Activated CD4-positive, alpha-beta memory T cell treated with anti-CD3 and anti-CD28 coated beads for 36 hours (primary cell): ENCODE measurements at regions of chr2 and their contacts with region 1.

Region 1: DNA sequence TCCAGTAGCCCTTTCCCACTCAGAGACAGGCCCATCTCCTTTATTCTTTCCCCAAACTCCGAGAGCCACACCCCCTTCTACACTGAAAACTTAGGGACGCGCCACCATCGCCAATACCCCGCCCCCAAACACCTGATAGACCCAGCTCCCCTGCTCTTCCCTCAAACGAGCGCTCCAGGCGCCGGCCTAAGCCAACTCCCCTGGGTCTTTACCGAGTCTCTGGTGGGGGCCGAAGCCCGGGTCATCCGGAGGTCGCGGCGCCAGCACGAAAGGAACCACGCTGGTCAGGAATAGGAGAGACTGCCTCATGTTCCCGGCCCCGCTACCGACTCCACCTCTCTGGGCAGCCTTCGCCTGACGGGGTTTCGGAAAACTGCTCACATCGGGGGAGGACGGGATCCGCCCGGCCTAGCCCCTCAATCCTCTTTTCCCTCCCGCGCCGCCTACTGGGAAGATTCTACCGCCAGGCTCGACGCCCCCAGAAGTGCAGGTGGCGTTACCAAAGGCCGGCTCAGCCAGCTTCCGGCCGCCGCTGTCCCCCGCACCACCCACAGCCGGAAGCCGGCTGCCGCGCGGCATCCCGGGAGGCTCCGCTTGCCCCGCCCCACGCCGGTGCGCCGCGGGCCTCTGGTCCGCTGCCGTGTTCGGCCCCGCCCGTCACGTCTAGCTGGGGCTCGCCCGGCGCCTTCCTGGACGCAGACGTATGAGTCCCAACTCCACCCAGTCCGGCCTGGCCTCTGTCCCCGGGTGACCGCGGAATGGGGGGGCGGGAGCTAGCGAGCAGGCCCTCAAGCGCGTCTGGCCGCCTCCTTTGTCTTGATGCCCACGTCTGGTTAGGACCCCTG is at the start of gene ADAM17:
- DNase-seq: peak; percentile 93
- H3K4me3 Mint-ChIP-seq: peak within 1 kb of the TSS; percentile 100
- H3K27ac Mint-ChIP-seq: peak within 1 kb of the TSS; percentile 98
- H3K4me1 Mint-ChIP-seq: peaks cover 50% of the 10 kb centered on the region
- H3K27me3 Mint-ChIP-seq: no peaks in the 10 kb centered on the region
- total RNA-seq, gene ADAM17: 24.0 to 24.7 TPM

Region 2: GRCh38 chr2:9423100-9423921 is 132.2 kb before region 1 on chr2 and contains the starts of genes CPSF3 and ITGB1BP1:
- CTCF ChIA-PET with region 1: interaction called, 6 read pairs
- POLR2A ChIA-PET with region 1: interaction called, 7 read pairs
- intact Hi-C with region 1: loop called (anchors 1 kb)
- DNase-seq: peak; percentile 98
- H3K4me3 Mint-ChIP-seq: peak within 1 kb of the TSS; percentile 87
- H3K27ac Mint-ChIP-seq: peak within 1 kb of the TSS; percentile 88
- H3K4me1 Mint-ChIP-seq: peaks cover 35% of the 10 kb centered on the region
- H3K27me3 Mint-ChIP-seq: no peaks in the 10 kb centered on the region
- total RNA-seq, gene CPSF3: 77.5 to 78.1 TPM
- total RNA-seq, gene ITGB1BP1: 136 to 142 TPM

Region 3: DNA sequence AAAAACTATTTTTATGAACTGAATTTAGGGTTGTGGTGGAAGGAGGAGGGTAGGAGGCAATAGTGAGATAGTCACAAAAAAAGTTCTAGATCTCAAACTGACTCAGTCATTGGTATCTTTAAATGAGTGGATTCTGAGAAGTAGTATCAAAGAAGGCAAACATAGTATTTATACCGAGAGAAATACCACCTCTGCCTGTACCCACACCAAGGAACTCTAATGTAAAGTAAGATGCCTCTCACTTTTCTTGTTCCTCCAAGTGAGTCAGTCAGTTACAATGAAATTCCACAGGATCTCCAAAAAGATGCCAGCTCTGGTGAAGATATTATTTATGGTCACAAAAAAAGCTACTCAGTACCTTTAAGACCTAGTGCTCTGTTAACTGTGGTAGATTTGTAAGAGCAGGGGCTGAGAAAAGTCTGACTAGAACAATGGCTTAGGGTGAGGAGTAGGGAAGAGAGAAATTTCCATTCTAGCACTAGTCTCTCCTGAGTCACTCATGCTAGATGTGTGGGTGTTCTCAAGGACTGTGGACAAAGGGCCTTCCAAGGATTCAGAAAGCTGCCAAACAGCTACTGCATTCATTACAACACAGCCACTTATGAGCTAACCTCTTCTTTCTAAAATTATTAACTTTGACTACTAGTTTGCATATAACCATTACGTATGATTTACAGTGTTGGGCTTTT is 39.0 kb after region 1 on chr2:
- CTCF ChIA-PET with region 1: interaction called, 17 read pairs
- POLR2A ChIA-PET with region 1: interaction called, 11 read pairs
- intact Hi-C with region 1: loop called (anchors 1 kb)
- DNase-seq: no peak
- H3K4me3 Mint-ChIP-seq: no peak overlapping the region
- H3K27ac Mint-ChIP-seq: peak overlapping the region; percentile 83
- H3K4me1 Mint-ChIP-seq: peaks cover 81% of the 10 kb centered on the region
- H3K27me3 Mint-ChIP-seq: no peaks in the 10 kb centered on the region

Region 4: GRCh38 chr2:9656270-9656766 is 100.8 kb after region 1 on chr2:
- CTCF ChIA-PET with region 1: no interaction called
- POLR2A ChIA-PET with region 1: no interaction called
- intact Hi-C with region 1: loop called (anchors 1 kb)
- DNase-seq: peak; percentile 90
- H3K4me3 Mint-ChIP-seq: peak overlapping the region; percentile 40
- H3K27ac Mint-ChIP-seq: peak overlapping the region; percentile 94
- H3K4me1 Mint-ChIP-seq: peaks cover 43% of the 10 kb centered on the region
- H3K27me3 Mint-ChIP-seq: peaks cover 9% of the 10 kb centered on the region

Region 5: GRCh38 chr2:9708683-9709538 is 153.4 kb after region 1 on chr2:
- CTCF ChIA-PET with region 1: interaction called, 4 read pairs
- POLR2A ChIA-PET with region 1: interaction called, 10 read pairs
- intact Hi-C with region 1: loop called (anchors 1 kb)
- DNase-seq: peak; percentile 80
- H3K4me3 Mint-ChIP-seq: no peak overlapping the region
- H3K27ac Mint-ChIP-seq: peak overlapping the region; percentile 93
- H3K4me1 Mint-ChIP-seq: peaks cover 63% of the 10 kb centered on the region
- H3K27me3 Mint-ChIP-seq: no peaks in the 10 kb centered on the region

Region 6: GRCh38 chr2:9770308-9771100 is 215.0 kb after region 1 on chr2:
- CTCF ChIA-PET with region 1: interaction called, 16 read pairs
- POLR2A ChIA-PET with region 1: interaction called, 5 read pairs
- intact Hi-C with region 1: no loop called
- DNase-seq: peak; percentile 74
- H3K4me3 Mint-ChIP-seq: no peak overlapping the region
- H3K27ac Mint-ChIP-seq: no peak overlapping the region
- H3K4me1 Mint-ChIP-seq: peaks cover 23% of the 10 kb centered on the region
- H3K27me3 Mint-ChIP-seq: no peaks in the 10 kb centered on the region

Region 7: GRCh38 chr2:9843229-9844035 is 287.9 kb after region 1 on chr2 and contains the start of gene TAF1B:
- CTCF ChIA-PET with region 1: no interaction called
- POLR2A ChIA-PET with region 1: interaction called, 13 read pairs
- intact Hi-C with region 1: no loop called
- DNase-seq: peak; percentile 92
- H3K4me3 Mint-ChIP-seq: peak within 1 kb of the TSS; percentile 91
- H3K27ac Mint-ChIP-seq: peak within 1 kb of the TSS; percentile 89
- H3K4me1 Mint-ChIP-seq: peaks cover 42% of the 10 kb centered on the region
- H3K27me3 Mint-ChIP-seq: no peaks in the 10 kb centered on the region
- total RNA-seq, gene TAF1B: 32.6 TPM